Heart right ventricle (tissue), 16 donors: ENCODE measurements at regions of chr15 and their contacts with region 1.

Region 1: DNA sequence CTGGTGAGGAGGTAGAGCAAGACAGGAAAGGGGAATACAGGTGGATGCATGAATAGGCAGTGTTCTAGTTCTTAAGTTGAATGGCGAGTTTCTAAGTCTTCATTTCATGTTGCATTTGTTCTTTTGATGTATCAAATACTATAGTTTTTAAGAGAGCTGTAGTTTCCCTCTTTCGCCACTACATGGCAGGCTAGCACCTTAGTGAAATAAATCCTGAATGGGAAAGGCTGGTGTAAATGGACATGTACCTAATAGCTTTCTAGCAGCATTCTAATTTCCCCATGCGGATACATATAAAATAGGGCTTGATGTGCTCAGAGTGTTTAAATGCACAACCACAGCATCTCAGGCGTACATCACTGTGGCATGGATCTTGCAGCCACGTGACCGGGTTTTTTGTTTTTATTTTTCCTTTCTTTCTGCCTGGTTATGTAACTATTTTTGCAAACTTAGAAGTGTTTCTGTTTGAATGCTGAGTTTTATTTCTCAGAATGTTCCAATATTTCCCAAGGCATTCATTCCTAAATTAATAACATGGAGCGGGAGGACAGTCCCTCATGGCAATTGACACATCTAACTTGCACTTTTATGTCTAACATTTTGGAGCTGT is 23.5 kb upstream of the CLN6 start:
- DNase-seq: peak in 1 of 2 donors; percentile 48
- ATAC-seq: peak in 6 of 8 donors; percentile 25 to 49 (median 41)
- H3K4me3 ChIP-seq: peak overlapping the region in 1 of 10 donors; percentile 8
- H3K27ac ChIP-seq: no peak overlapping the region
- H3K4me1 ChIP-seq: peaks cover 0 to 35% (median 15%) of the 10 kb centered on the region in 9 donors
- H3K27me3 ChIP-seq: no peaks in the 10 kb centered on the region
- CTCF ChIP-seq: peak; percentile 67 to 91 (median 88)

Region 2: DNA sequence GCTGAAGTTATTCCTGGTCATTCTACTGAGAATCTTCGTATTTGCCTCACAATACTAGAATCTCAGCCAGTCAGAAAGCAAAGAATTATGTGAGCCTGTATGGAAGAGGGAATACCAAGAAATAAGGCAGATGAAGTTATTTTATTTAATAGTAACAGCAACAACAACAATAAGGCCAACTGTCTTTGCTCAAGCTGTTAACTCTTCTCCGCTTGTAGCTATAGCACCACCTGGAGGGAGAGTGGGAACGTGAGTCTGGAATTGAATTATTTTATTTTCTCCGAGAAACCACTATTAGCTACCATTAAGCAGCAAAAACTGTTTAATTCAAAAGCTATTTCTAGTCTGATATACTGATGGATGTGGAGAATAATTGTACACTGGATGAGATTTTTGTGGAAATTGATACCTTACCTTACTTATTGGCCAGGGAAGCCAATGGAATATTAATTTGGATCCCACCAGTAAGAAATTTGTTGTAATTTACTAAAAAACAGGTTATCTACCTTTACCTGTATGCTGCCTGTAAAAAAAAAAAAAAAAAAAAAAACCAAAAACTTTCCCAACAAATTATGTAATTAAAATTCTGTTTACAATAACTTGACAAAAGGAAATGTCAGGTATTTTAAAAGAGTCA is 98.0 kb before region 1 on chr15:
- intact Hi-C with region 1: no loop called
- DNase-seq: peak in 1 of 2 donors; percentile 59
- ATAC-seq: peak in 7 of 8 donors; percentile 45 to 75 (median 57)
- H3K4me3 ChIP-seq: no peak overlapping the region
- H3K27ac ChIP-seq: no peak overlapping the region
- H3K4me1 ChIP-seq: peaks cover 0 to 18% (median 0%) of the 10 kb centered on the region in 9 donors
- H3K27me3 ChIP-seq: no peaks in the 10 kb centered on the region
- CTCF ChIP-seq: peak; percentile 59 to 89 (median 72)

Region 3: DNA sequence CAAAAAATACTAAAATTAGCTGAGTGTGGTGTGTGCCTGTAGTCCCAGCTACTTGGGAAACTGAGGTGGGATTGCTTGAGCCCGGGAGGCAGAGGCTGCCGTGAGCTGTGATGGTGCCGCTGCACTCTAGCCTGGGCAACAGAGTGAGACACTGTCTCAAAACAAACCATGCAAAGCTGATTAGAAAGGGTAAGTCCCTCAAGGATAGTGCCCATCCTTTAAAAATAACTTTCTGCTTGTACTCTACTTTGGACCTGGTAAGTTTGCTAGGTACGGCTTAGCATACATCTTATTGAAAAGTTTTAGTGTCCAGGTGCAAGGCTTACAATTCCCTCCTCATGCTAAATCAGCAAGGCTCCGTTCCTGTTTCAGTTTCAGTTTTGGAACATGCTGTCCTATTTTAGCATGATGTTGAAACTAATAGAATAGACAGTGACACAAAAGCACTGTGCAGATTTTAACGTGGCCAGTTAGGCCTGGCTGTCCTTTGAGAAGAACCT is 45.9 kb after region 1 on chr15:
- intact Hi-C with region 1: loop called in 4 of 10 experiments (anchors 5 to 10 kb)
- DNase-seq: peak in 1 of 2 donors; percentile 19
- ATAC-seq: peak in 7 of 8 donors; percentile 25 to 84 (median 74)
- H3K4me3 ChIP-seq: peak overlapping the region in 9 of 10 donors; percentile 10 to 48 (median 35)
- H3K27ac ChIP-seq: peak overlapping the region in 8 of 10 donors; percentile 6 to 73 (median 42)
- H3K4me1 ChIP-seq: peaks cover 4 to 63% (median 37%) of the 10 kb centered on the region in 9 donors
- H3K27me3 ChIP-seq: no peaks in the 10 kb centered on the region
- CTCF ChIP-seq: no peak

Region 4: DNA sequence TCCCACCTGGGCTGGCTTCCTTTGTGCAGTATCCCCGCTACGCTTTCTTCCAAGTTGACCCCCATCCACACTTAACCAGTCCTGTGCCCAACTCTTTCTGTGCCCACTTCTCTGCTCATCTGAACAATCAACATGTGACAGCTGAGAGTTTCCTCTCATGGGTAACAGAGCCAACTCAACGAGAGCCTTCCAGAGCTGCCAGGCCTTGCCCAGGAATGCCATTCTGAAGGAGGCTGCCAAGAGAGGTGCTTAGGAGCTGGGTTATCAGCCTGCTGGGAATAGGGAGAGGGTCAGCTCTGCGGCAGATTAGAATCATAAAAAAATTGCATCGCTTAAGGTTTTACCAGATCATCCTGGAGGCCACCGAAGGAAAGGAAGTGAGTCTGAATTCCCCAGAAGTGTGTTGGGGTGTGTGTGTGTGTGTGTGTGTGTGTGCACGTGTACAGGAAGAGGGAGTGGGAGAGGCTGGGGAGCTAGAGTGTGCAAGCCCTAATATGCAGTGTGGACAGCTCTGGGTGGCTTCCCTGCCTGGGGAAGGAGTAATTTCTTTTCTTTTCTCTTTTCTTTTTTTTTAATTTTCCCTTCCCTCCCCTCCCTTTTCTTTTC is 112.2 kb after region 1 on chr15:
- intact Hi-C with region 1: loop called in 1 of 10 experiments (anchors 10 kb)
- DNase-seq: peak in 1 of 2 donors; percentile 55
- ATAC-seq: peak; percentile 54 to 80 (median 66)
- H3K4me3 ChIP-seq: no peak overlapping the region
- H3K27ac ChIP-seq: peak overlapping the region; percentile 75 to 93 (median 83)
- H3K4me1 ChIP-seq: peaks cover 53 to 98% (median 82%) of the 10 kb centered on the region in 9 donors
- H3K27me3 ChIP-seq: no peaks in the 10 kb centered on the region
- CTCF ChIP-seq: no peak

Region 5: GRCh38 chr15:68389936-68390790 is 137.1 kb after region 1 on chr15:
- intact Hi-C with region 1: loop called in 2 of 10 experiments (anchors 5 kb)
- DNase-seq: no peak
- ATAC-seq: peak in 3 of 8 donors; percentile 27 to 80 (median 71)
- H3K4me3 ChIP-seq: no peak overlapping the region
- H3K27ac ChIP-seq: no peak overlapping the region
- H3K4me1 ChIP-seq: peaks cover 0 to 11% (median 0%) of the 10 kb centered on the region in 9 donors
- H3K27me3 ChIP-seq: peaks cover 0 to 5% (median 0%) of the 10 kb centered on the region in 7 donors
- CTCF ChIP-seq: no peak

Region 6: DNA sequence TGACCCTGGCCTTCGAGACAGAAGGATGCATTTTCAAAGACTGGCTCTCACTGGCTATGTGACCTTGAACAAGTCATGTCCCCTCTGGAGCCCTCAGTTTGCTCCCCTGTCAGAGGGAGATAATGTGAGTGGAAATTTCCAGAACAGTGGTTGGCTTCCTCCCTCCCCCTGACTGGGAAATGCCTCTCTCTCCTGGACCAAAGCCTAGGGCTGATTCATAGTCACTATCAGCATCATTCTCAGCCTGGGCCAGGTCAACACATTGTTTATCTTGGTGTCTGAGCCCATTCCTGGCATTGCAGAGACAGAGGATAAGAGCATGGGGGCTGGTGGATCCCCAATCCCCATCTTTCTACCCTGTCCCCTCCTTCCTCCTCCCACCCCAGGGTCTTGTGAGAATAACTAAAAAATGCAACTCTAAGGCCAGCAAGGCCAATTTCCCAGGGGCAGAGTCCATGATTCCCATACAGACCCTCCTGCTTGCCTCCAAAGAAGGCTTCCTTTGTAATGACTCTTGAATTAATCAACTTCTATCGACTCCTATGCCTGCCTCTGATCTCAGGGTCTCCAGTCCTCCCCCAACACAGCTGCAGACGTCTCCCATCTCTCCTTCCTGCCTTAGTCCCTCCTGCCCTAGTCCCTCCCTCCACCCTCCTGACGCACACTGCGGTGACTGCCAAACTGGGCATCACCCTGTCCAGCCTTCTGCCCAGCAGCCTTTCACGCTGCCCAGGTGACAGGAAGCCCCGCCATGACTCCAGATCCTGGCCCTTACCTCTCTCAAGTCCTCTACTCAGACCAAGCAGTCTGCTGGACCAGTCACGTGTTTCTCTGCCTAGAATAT is 290.4 kb after region 1 on chr15:
- intact Hi-C with region 1: loop called in 1 of 10 experiments (anchors 10 kb)
- DNase-seq: peak; percentile 32 to 86
- ATAC-seq: peak; percentile 92 to 97 (median 94)
- H3K4me3 ChIP-seq: no peak overlapping the region
- H3K27ac ChIP-seq: peak overlapping the region in 8 of 10 donors; percentile 24 to 78 (median 54)
- H3K4me1 ChIP-seq: peaks cover 0 to 20% (median 18%) of the 10 kb centered on the region in 9 donors
- H3K27me3 ChIP-seq: no peaks in the 10 kb centered on the region
- CTCF ChIP-seq: no peak

Region 7: DNA sequence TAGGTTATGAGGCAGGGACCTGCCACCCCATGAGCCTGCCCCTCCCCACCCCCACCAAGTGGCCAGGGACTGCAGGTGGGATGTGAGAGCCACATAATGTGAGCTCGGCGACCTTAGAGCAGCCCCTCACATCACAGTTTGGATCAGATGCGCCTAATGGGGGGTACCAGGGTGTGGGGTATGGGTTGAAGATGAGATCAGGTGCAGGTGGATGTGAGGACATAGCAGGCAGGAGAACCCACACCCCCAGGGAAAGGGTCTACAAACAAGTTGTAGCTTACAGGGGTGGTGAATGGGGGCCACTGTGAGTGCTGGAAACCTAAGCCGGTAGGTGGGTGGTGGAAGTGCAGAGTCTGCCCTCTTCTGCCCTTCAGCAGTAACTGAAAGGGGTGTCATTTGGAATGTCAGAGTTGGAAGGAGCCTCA is 419.8 kb after region 1 on chr15:
- intact Hi-C with region 1: loop called in 3 of 10 experiments (anchors 5 to 10 kb)
- DNase-seq: no peak
- ATAC-seq: peak in 1 of 8 donors; percentile 29
- H3K4me3 ChIP-seq: no peak overlapping the region
- H3K27ac ChIP-seq: no peak overlapping the region
- H3K4me1 ChIP-seq: peaks cover 4 to 28% (median 23%) of the 10 kb centered on the region in 9 donors
- H3K27me3 ChIP-seq: no peaks in the 10 kb centered on the region
- CTCF ChIP-seq: peak in 5 of 9 donors; percentile 11 to 32 (median 24)